Prostate gland (tissue), 2 donors: ENCODE measurements at regions of chr22 and their contacts with region 1.

Region 1: GRCh38 chr22:28911777-28912669 is 28.7 kb downstream of the ZNRF3 start:
- DNase-seq: peak; percentile 42
- H3K4me3 ChIP-seq: no peak overlapping the region
- H3K27ac ChIP-seq: peak overlapping the region; percentile 50 to 55
- H3K4me1 ChIP-seq: peaks cover 15% of the 10 kb centered on the region
- H3K27me3 ChIP-seq: no peaks in the 10 kb centered on the region
- CTCF ChIP-seq: no peak
- POLR2A ChIP-seq: no peak

Region 2: DNA sequence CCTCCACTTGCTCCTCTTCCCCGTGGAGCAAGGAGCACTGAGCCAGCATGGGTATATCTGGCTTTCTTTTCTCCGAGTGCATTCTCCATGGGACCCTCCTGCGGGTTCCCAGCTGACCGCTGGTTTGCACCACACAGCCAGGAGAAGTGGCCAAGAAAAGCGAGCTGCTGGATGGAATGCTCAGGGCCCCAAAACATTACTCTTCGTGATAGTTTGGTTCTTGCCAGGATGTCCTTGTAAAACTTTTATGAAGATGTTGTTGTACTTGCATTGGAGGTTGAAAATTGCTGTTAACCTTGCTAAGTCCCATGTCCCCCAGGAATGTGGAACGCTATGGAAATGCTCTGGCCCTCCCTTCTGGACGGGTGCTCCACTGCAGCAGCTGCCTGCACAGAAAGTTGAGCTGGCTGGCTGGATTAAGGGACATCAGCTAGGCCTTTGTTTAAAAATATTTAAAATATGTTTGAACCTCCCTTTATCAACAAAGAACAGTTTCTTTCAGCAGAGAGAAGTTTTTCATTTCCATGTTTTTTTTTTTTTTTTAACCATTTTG is 40.0 kb after region 1 on chr22:
- intact Hi-C with region 1: loop called (anchors 5 kb)
- DNase-seq: peak; percentile 81
- H3K4me3 ChIP-seq: no peak overlapping the region
- H3K27ac ChIP-seq: peak overlapping the region; percentile 10 to 34
- H3K4me1 ChIP-seq: peaks cover 4% of the 10 kb centered on the region
- H3K27me3 ChIP-seq: no peaks in the 10 kb centered on the region
- CTCF ChIP-seq: peak in 3 of 4 experiments; percentile 40 to 65 (median 46)
- POLR2A ChIP-seq: no peak